ENCODE measurements at regions of chr6 and their contacts with region 1.

Region 1: DNA sequence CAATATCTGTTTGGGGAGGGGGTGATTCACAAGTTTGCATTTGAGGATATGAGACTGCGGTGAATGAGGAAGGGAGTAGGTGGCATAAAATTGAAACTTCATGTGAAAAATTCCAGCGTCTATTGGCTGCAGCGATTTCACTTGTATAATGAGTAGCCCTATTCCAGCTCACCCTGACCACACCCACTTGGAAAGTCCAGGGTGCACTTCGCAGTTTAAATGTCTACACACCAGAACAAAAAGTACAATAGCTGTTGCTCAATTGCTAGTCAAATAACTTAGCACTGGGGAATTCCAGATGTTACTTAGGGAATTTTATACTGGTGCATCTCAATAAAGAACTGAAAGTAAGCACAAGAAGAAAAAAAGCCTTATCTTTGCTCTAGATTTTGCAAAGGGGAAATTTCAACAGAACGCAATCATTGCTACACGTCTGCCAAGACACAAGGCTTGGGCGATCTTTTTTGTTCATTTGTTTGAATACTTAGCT is 6.3 kb downstream of the TNFAIP3 start:
- DNase-seq: peak in 6 of 9 donors; percentile 12 to 81 (median 37)
- ATAC-seq: peak; percentile 54
- H3K4me3 ChIP-seq: peak overlapping the region; percentile 0
- H3K4me3 Mint-ChIP-seq: peak overlapping the region; percentile 60 to 98 (median 94)
- H3K27ac ChIP-seq: peak overlapping the region; percentile 99
- H3K27ac Mint-ChIP-seq: peak overlapping the region; percentile 61 to 99 (median 94)
- H3K4me1 ChIP-seq: peaks cover 38 to 49% of the 10 kb centered on the region in 2 donors
- H3K4me1 Mint-ChIP-seq: peaks cover 53 to 91% (median 78%) of the 10 kb centered on the region in 7 donors
- H3K27me3 ChIP-seq: no peaks in the 10 kb centered on the region
- H3K27me3 Mint-ChIP-seq: no peaks in the 10 kb centered on the region

Region 2: DNA sequence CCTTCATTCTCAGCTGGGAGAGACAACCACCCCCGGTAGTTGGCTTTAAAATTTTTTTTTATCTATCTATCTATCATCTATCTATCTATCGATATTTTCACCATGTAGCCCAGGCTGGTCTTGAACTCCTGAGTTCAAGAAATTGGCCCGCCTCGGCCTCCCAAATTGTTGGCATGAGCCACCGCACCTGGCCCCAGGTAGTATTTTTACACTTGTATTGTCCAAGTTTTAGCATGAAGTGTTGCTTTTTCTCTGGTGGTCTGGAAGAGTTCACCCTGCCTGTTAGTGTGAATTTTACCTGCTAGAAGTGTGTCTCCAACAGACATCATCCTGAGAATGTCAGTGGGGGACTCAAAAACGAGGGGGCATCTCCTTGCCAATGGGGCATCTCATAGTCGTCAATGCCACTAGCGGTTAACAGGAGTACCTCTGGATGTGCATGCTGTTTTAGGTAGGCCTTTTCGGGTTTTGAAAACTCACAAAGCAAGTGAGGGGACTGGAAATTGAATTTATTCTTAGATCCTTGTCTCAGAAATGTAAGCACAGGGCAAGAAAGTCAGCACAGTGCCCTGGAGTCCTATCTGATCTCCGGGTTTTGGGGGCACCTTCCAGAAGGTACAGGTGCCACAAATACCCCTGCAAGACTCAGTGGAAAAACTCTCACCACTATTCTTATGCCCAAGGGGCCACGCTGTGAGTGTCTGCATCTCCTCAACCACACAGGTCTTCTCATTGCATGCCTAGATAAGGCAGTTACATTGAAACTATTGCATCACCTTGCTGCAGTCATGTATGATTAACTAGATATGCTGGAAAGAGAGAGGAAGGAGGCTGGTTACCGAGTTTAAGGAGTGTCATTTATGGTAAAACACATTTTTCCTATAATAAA is 30.9 kb after region 1 on chr6:
- CTCF ChIA-PET with region 1: interaction called, 3 read pairs
- POLR2A ChIA-PET with region 1: interaction called, 3 read pairs
- intact Hi-C with region 1: loop called in 1 of 2 experiments (anchors 1 kb)
- DNase-seq: peak in 1 of 9 donors; percentile 49
- ATAC-seq: peak; percentile 72
- H3K4me3 ChIP-seq: no peak overlapping the region
- H3K4me3 Mint-ChIP-seq: peak overlapping the region in 7 of 10 donors; percentile 2 to 79 (median 64)
- H3K27ac ChIP-seq: no peak overlapping the region
- H3K27ac Mint-ChIP-seq: peak overlapping the region in 2 of 9 donors; percentile 10 to 91
- H3K4me1 ChIP-seq: peaks cover 4 to 6% of the 10 kb centered on the region in 2 donors
- H3K4me1 Mint-ChIP-seq: peaks cover 4 to 51% (median 22%) of the 10 kb centered on the region in 7 donors
- H3K27me3 ChIP-seq: no peaks in the 10 kb centered on the region
- H3K27me3 Mint-ChIP-seq: peaks cover 0 to 3% (median 0%) of the 10 kb centered on the region in 5 donors

Measured in naive thymus-derived CD4-positive, alpha-beta T cell (primary cell).